Right lobe of liver (tissue), 6 donors: ENCODE measurements at regions of chr17 and their contacts with region 1.

Region 1: DNA sequence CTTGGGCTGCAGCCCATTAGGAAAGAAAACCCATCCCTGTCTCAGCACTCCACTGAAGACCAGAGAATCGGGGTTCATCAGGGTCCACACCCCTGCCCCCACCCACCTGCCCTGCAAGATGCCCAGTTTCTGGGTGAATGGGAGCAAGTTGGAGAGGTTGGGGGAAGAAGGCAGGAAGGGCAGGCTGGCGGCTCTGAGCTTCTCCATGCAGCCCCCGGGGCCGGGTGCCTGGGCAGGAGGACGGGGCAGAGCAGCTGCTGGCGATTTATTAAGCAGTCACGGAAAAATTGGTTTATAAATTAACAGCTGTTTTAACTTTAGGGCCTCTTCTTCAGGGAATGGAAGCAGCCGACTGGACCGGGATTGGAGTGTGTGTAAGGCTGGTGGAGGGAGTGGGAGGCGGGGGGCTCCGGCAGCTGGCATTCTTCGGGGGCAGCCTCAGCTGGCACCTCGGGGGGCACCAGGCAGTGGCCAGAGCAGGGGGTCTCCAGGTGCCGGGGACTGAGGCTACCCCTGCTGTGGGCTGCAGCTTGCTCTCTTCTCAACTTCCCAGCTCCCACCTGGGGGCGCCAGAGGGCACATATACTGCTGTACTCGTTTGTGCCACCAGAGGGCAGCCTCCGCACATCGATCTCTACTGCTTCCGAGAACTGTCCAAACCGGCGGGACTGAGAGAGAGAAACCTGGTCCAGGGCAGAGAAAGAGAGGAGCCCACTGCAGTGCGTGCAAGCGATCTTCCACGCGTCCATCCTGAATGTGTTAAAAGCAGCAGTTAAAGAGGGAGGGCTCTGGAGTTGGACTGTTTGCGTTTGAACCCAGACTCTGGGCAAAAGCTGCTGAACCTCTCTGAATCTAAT is 5.0 kb upstream of the PPP1R1B start:
- DNase-seq: peak; percentile 84 to 89 (median 84)
- ATAC-seq: peak; percentile 84 to 93 (median 88)
- H3K4me3 ChIP-seq: no peak overlapping the region
- H3K27ac ChIP-seq: no peak overlapping the region
- H3K4me1 ChIP-seq: no peaks in the 10 kb centered on the region
- H3K27me3 ChIP-seq: peaks cover 0 to 1% of the 10 kb centered on the region in 2 donors
- CTCF ChIP-seq: peak; percentile 99 to 100 (median 100)
- POLR2A ChIP-seq: no peak

Region 2: DNA sequence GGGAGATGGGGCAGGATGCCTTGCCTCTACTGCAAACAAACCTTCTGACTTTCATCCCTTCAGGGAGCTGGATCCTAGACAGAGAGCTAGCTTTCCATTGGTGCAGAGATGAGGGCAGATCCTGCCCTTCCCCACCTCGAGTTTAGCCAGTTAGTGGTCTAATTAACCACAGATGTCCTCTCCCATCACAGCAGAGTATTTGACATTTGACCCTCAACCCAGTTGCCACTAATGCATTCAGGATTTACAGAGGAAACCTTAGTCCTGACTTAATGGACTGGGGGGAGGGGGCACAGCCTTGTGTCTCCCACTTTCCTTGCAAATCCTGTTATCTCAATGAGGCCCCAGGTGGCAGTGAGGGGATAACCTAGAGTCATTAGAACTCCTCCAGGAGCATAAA is 832.6 kb before region 1 on chr17:
- intact Hi-C with region 1: no loop called
- DNase-seq: no peak
- ATAC-seq: no peak
- H3K4me3 ChIP-seq: no peak overlapping the region
- H3K27ac ChIP-seq: no peak overlapping the region
- H3K4me1 ChIP-seq: no peaks in the 10 kb centered on the region
- H3K27me3 ChIP-seq: no peaks in the 10 kb centered on the region
- CTCF ChIP-seq: no peak
- POLR2A ChIP-seq: no peak

Region 3: DNA sequence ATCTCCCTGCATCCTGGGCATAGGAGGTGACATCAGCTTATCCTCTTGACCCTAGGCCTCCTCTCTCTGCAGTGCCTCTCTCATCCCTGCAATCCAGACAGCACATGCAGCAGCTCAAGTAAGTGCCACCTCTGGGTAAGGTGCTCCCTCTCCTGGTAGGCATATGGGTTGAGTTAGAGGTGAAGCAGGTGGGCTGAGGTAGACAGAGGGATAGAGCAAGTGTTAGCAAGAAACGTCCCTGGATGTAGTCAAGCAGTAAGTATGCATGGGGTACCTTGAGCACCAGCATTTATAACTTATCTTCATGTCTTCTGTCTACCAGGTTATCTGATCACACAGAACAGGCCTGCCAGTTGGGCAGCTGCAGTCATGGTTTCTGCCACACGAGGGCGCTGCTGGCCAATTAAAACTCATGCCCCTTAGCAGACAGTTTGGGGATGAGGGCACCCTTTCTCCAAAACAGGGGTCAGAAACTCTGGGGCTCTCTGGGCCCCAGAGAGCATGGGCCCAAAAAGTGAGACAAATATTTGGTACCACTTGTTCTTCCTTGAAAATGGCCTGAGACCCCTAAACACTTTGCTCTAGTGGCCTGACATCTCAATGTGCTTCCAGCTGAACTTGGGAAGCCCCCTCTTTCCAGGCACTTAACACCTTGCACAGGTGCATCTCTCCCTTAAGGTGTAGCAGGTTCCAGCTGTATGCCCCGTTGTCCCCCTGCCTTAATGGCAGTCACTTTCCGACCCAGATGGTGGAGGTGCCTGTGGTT is 73.9 kb before region 1 on chr17:
- intact Hi-C with region 1: loop called (anchors 5 to 10 kb)
- DNase-seq: peak; percentile 52 to 61 (median 60)
- ATAC-seq: peak; percentile 65 to 81 (median 75)
- H3K4me3 ChIP-seq: no peak overlapping the region
- H3K27ac ChIP-seq: no peak overlapping the region
- H3K4me1 ChIP-seq: peaks cover 0 to 7% (median 4%) of the 10 kb centered on the region in 4 donors
- H3K27me3 ChIP-seq: no peaks in the 10 kb centered on the region
- CTCF ChIP-seq: peak; percentile 69 to 95 (median 95)
- POLR2A ChIP-seq: no peak

Region 4: GRCh38 chr17:39671651-39672521 is 50.1 kb after region 1 on chr17:
- intact Hi-C with region 1: loop called in 1 of 2 experiments (anchors 10 kb)
- DNase-seq: peak in 2 of 3 donors; percentile 42 to 55
- ATAC-seq: peak; percentile 51 to 64 (median 56)
- H3K4me3 ChIP-seq: no peak overlapping the region
- H3K27ac ChIP-seq: no peak overlapping the region
- H3K4me1 ChIP-seq: peaks cover 0 to 18% (median 3%) of the 10 kb centered on the region in 4 donors
- H3K27me3 ChIP-seq: peaks cover 0 to 4% of the 10 kb centered on the region in 2 donors
- CTCF ChIP-seq: peak; percentile 52 to 63 (median 58)
- POLR2A ChIP-seq: no peak

Region 5: DNA sequence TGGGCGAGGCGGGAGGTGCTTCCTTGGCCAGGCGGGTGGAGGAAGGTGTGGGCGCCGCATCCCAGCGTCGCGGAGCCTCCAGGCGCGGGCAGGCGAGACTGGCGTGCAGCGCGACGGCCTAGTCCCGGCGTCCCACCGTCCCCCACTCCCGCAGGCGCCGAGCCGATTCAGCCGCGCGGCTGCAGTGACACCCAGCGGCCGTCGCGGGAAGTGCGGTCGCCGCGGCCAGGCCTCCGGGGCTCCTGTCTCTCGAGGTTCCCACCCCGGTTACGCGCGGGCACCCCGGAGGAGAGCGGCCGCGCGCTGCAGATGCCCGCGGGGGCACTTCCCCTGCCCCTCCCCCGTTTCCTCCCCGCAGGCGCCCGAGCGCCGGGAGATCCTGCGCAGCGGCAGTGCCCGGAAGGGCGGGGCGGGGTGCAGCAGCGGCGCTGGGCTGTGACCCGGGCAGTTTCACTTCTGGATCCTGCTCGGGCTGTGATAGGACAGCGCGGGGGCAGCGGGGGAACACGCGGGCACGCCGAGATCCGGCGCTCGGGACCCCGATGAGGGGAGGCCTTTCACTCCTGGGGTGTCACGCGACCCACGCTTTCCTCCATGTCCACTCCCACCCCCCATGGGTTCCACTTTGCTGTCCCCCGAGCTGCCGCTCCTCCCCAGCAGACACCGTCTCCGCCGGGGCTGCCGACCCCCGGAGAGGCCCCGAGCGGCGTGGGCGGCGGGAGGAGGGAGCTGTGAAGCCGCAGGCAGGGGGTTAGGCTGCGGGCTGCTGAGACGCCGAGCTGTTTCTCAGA is 132.6 kb after region 1 on chr17:
- intact Hi-C with region 1: loop called in 1 of 2 experiments (anchors 5 kb)
- DNase-seq: peak; percentile 96 to 97 (median 97)
- ATAC-seq: peak; percentile 88 to 93 (median 90)
- H3K4me3 ChIP-seq: peak overlapping the region; percentile 54 to 79 (median 71)
- H3K27ac ChIP-seq: peak overlapping the region; percentile 82 to 97 (median 90)
- H3K4me1 ChIP-seq: peaks cover 0 to 18% (median 2%) of the 10 kb centered on the region in 4 donors
- H3K27me3 ChIP-seq: no peaks in the 10 kb centered on the region
- CTCF ChIP-seq: peak; percentile 97 to 100 (median 98)
- POLR2A ChIP-seq: peak; percentile 76